Mammary epithelial cell (primary cell): ENCODE measurements at regions of chr9 and their contacts with region 1.

Region 1: DNA sequence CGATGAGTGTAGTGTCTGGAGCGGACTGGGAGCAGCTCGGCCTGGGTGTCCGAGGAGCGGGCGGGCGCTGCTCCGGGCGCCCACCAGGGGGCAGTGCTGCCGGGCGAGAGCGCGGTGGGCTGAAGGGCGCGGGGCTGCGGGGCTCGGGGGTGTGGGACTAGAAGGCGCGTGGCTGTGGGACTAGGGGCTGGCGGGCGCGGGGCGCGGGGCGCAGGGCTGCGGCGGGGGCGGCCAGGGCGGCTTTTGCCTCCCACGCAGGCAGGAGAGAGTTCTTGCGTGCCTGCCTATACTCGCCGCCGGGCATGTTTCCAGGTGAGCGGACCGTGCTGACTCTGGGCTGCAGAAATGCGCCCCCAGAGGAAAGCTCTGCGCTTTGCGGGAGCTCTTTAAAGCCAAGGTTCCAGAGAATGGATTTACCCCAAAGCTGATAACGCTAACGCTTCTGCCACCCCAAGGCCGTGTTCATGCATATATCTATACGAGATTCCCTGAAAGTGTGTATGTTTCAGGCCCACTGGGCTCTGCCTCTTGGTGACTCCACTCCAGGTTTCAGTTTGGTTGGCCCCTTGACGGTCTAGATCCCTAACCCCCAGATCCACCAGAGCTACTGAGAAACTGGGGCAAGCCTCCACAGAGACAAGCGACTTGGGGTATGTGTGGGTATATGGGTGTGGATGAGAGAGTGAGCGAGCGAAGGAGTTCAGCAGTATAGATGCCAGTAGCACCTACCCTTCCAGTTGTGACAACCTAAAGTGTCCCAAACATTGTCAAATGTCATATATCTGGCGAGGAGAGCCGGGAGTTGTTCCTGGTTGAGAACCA is 56.2 kb downstream of the ACER2 start:
- DNase-seq: peak; percentile 63
- H3K4me3 ChIP-seq: peak overlapping the region; percentile 10 to 43 (median 40)
- H3K27ac ChIP-seq: no peak overlapping the region
- H3K4me1 ChIP-seq: peaks cover 4% of the 10 kb centered on the region
- H3K27me3 ChIP-seq: no peaks in the 10 kb centered on the region
- CTCF ChIP-seq: peak; percentile 49 to 65

Region 2: GRCh38 chr9:19331877-19332276 is 133.1 kb before region 1 on chr9:
- CTCF ChIA-PET with region 1: no interaction called
- dilution Hi-C with region 1: no loop called
- in situ Hi-C with region 1: no loop called
- intact Hi-C with region 1: no loop called
- DNase-seq: no peak
- H3K4me3 ChIP-seq: no peak overlapping the region
- H3K27ac ChIP-seq: no peak overlapping the region
- H3K4me1 ChIP-seq: no peaks in the 10 kb centered on the region
- H3K27me3 ChIP-seq: no peaks in the 10 kb centered on the region
- CTCF ChIP-seq: no peak

Region 3: GRCh38 chr9:19512103-19512832 is 47.3 kb after region 1 on chr9:
- CTCF ChIA-PET with region 1: interaction called, 11 read pairs
- dilution Hi-C with region 1: no loop called
- in situ Hi-C with region 1: no loop called
- intact Hi-C with region 1: no loop called
- DNase-seq: no peak
- H3K4me3 ChIP-seq: no peak overlapping the region
- H3K27ac ChIP-seq: no peak overlapping the region
- H3K4me1 ChIP-seq: no peaks in the 10 kb centered on the region
- H3K27me3 ChIP-seq: peaks cover 6% of the 10 kb centered on the region
- CTCF ChIP-seq: no peak